ENCODE measurements at regions of chr6 and their contacts with region 1.

Region 1: GRCh38 chr6:41072676-41073623 is at the start of gene NFYA:
- DNase-seq: no peak
- ATAC-seq: peak; percentile 85
- H3K4me3 ChIP-seq: peak within 1 kb of the TSS; percentile 88
- H3K27ac ChIP-seq: peak within 1 kb of the TSS; percentile 99
- H3K4me1 ChIP-seq: peaks cover 7% of the 10 kb centered on the region; the same call in 1 of the 2 replicates
- H3K27me3 ChIP-seq: no peaks in the 10 kb centered on the region
- CTCF ChIP-seq: peak in 2 of 3 experiments; percentile 32 to 34; a peak in 4 of 6 replicates
- EP300 ChIP-seq: no peak
- POLR2A ChIP-seq: peak; percentile 33
- RAD21 ChIP-seq: no peak
- polyA plus RNA-seq, gene NFYA: 6.4 to 7.3 TPM

Region 2: GRCh38 chr6:41092421-41093140 is 19.6 kb after region 1 on chr6:
- CTCF ChIA-PET with region 1: interaction called, 13 read pairs
- POLR2A ChIA-PET with region 1: interaction called, 4 read pairs
- RAD21 ChIA-PET with region 1: interaction called, 4 read pairs
- SMC1A ChIA-PET with region 1: interaction called, 10 read pairs
- in situ Hi-C with region 1: no loop called
- intact Hi-C with region 1: no loop called
- DNase-seq: no peak
- ATAC-seq: peak; percentile 58
- H3K4me3 ChIP-seq: no peak overlapping the region
- H3K27ac ChIP-seq: no peak overlapping the region
- H3K4me1 ChIP-seq: no peaks in the 10 kb centered on the region
- H3K27me3 ChIP-seq: no peaks in the 10 kb centered on the region
- CTCF ChIP-seq: peak; percentile 31 to 45 (median 41); a peak in 4 of 6 replicates
- EP300 ChIP-seq: no peak
- POLR2A ChIP-seq: no peak
- RAD21 ChIP-seq: peak; percentile 62

Measured in GM12878 (cell line).